PC-9 (cell line): ENCODE measurements at regions of chr6 and their contacts with region 1.

Region 1: DNA sequence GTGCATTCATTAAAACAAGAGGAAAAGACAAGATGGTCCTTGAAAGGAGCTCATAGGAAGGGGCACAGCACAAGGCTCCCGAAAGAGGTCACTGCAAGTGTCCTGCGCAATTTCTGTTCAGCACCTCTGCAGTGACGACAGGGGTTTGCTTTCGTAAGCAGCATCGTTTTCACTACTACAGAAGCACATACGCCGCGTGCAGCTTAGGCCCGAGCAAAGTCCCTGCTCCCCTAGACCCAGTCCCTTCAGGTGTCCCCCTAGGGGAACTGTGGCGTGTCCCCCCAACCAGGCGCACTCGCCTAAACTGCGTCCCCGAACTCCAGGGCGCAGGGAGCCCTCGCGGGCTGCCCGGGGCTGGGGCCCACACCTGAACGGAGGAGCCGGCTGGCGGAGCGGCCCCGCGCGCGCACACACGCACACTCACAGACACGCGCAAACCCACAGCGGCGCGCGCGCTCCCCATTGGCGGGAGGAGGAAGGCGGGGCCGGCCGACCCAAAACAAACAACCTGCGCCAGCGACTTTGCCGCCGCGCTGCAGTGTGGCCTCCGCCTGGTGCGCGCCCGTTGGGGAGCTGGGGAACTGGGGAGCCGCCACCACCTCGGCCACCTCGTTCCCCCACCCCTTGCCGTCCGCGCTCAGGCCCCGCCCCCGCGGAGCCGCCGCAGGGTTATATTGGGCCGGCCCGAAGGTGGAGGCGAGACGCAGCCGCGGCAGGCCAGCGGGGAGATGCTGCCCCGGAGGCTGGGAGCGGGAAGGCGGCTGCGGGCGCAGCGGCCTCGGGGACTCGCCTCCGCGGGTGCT is at the start of gene FOXQ1:
- DNase-seq: peak; percentile 82 to 97
- H3K4me3 ChIP-seq: peak within 1 kb of the TSS; percentile 69
- H3K27ac ChIP-seq: peak within 1 kb of the TSS; percentile 90
- H3K4me1 ChIP-seq: peaks cover 11% of the 10 kb centered on the region; the same call in 1 of the 2 replicates
- H3K27me3 ChIP-seq: no peaks in the 10 kb centered on the region
- CTCF ChIP-seq: no peak
- total RNA-seq, gene FOXQ1: 55.8 and 57.0 TPM in 2 replicates

Region 2: DNA sequence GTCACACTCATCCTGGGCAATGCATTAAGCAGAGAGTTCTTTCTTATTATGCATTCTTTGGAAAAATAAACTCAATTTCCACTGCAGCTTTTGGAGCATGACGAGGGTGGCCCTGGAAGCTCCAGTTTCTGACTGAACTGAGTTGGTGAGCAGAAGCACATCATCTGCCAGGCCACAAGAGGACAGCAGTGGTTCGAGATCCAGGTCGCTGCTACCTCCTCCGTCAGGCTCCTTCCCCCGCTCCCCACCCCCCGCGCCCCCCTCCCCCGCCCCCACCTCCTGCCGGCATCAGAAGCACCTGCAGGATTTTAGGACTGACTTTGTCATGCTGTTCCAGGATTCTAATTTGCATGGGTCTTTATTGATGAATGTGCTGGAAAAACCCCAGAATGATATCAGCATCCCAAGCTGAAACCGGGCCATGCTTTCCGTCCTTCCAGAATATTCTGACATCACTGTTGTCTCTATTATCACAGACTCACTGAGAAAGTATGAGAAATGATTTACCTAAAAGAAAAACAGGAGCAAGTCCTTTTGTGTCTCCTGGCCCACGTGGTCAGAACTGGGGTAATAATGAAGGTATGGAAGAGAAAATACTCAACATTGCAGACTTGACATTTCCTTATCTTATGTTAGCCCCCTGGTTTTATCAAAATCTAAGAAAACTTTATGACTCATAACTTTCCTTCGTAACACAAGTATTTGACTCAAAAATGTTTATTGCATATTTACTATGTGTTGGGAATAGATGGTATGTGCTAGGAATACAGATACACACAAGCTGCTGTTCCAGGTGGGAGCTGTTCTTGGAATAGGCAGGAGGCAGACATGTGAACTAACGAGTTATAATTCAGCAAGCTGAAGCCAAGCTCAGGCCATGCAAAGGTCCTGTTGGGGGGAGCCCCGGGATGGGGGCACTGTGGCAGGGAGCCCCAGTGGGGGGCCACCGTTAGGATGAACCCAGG is 398.4 kb before region 1 on chr6:
- CTCF ChIA-PET with region 1: no interaction called
- POLR2A ChIA-PET with region 1: no interaction called
- intact Hi-C with region 1: loop called (anchors 1 kb)
- DNase-seq: peak; percentile 34 to 58
- H3K4me3 ChIP-seq: no peak overlapping the region
- H3K27ac ChIP-seq: no peak overlapping the region
- H3K4me1 ChIP-seq: peaks cover 7% of the 10 kb centered on the region
- H3K27me3 ChIP-seq: no peaks in the 10 kb centered on the region
- CTCF ChIP-seq: peak; percentile 49

Region 3: GRCh38 chr6:1110164-1110563 is 201.4 kb before region 1 on chr6:
- CTCF ChIA-PET with region 1: no interaction called
- POLR2A ChIA-PET with region 1: interaction called, 4 read pairs
- intact Hi-C with region 1: loop called (anchors 2 kb)
- DNase-seq: peak in 1 of 2 experiments; percentile 7
- H3K4me3 ChIP-seq: no peak overlapping the region
- H3K27ac ChIP-seq: no peak overlapping the region
- H3K4me1 ChIP-seq: no peaks in the 10 kb centered on the region
- H3K27me3 ChIP-seq: no peaks in the 10 kb centered on the region
- CTCF ChIP-seq: no peak

Region 4: DNA sequence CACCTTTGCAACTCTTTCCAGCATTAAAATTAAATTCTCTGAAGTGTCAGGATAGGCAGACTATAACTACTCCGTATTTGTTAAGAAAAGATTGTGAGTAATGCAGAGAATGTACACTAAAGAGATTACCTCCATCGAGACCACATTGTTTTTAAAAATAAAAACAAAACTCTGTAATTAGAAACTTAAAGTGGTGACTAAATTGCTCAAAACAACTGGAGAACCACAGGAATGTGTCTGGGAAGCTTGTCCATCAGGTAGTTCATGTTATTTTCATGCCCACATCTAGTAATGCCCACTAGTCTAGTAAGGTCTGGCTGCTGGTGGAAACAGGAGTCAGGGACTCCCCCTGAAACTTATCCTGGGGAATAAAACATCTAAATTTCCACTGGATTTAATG is 102.7 kb before region 1 on chr6:
- CTCF ChIA-PET with region 1: no interaction called
- POLR2A ChIA-PET with region 1: no interaction called
- intact Hi-C with region 1: loop called (anchors 2 kb)
- DNase-seq: peak; percentile 30 to 79
- H3K4me3 ChIP-seq: no peak overlapping the region
- H3K27ac ChIP-seq: peak overlapping the region; percentile 44; the same call in 1 of the 2 replicates
- H3K4me1 ChIP-seq: peaks cover 13% of the 10 kb centered on the region
- H3K27me3 ChIP-seq: no peaks in the 10 kb centered on the region
- CTCF ChIP-seq: no peak

Region 5: DNA sequence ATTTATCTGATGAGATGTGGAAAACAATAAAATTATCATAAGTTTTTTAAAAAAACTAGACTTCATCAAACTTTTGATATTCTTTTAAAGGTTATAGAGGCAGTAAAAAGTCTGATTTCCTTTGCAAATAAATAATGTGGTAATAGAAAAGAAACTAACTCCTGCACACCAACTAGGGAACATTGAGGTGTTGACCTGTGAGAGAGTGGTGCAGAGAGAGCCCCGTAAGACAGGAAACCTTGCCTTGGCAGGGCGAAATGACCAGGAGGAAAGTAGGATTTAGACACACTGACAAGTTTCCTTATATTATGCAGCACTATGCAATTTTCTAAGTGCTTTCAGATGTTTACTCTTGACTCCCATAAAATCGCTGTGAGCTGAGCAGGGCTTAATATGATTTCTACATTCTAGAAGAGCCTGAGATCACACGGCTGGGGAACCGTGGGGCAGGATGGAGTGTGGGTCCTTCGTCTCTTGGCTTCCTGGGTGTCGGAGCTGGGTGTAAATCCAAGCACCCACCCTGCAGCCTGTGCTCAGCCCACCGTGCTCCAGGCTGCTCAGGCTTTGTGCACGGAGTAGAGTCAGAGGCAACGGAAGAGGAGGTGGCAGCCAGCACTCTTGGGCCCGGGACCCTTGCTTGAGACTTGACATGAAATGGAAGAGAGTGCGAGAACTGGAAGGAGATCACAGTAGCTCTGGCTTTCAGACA is 61.0 kb before region 1 on chr6:
- CTCF ChIA-PET with region 1: no interaction called
- POLR2A ChIA-PET with region 1: no interaction called
- intact Hi-C with region 1: loop called (anchors 2 kb)
- DNase-seq: peak in 1 of 2 experiments; percentile 48
- H3K4me3 ChIP-seq: peak overlapping the region; percentile 42; the same call in 1 of the 2 replicates
- H3K27ac ChIP-seq: peak overlapping the region; percentile 94
- H3K4me1 ChIP-seq: peaks cover 39% of the 10 kb centered on the region
- H3K27me3 ChIP-seq: no peaks in the 10 kb centered on the region
- CTCF ChIP-seq: no peak

Region 6: GRCh38 chr6:1325461-1326309 is 14.1 kb after region 1 on chr6:
- CTCF ChIA-PET with region 1: interaction called, 5 read pairs
- POLR2A ChIA-PET with region 1: interaction called, 25 read pairs
- intact Hi-C with region 1: no loop called
- DNase-seq: peak; percentile 91 to 98
- H3K4me3 ChIP-seq: peak overlapping the region; percentile 31; the same call in 1 of the 2 replicates
- H3K27ac ChIP-seq: peak overlapping the region; percentile 100
- H3K4me1 ChIP-seq: peaks cover 80% of the 10 kb centered on the region
- H3K27me3 ChIP-seq: no peaks in the 10 kb centered on the region
- CTCF ChIP-seq: no peak

Region 7: DNA sequence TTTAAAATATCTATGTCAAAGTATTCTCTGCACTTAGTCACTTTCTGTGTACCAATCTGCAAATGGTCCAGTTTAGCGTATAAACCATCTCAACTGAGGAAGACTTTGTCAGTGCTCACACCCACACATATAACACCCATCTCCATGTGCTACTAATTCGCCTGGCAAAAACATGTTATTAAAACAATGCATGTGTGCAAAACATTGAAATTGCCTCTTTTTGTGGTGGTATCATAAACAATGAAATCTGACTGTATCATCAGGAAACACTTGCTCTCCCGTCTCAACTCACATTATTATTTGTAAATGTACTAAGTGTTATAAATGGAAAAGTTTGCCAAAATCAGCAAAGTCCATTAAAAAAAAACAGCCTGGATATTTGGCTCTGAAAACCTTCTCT is 192.2 kb after region 1 on chr6:
- CTCF ChIA-PET with region 1: no interaction called
- POLR2A ChIA-PET with region 1: interaction called, 14 read pairs
- intact Hi-C with region 1: no loop called
- DNase-seq: no peak
- H3K4me3 ChIP-seq: no peak overlapping the region
- H3K27ac ChIP-seq: no peak overlapping the region
- H3K4me1 ChIP-seq: no peaks in the 10 kb centered on the region
- H3K27me3 ChIP-seq: no peaks in the 10 kb centered on the region
- CTCF ChIP-seq: no peak